Activated B cell treated with CpG ODN at 0.5 μM for 24 hours (primary cell): ENCODE measurements at regions of chr6 and their contacts with region 1.

Region 1: DNA sequence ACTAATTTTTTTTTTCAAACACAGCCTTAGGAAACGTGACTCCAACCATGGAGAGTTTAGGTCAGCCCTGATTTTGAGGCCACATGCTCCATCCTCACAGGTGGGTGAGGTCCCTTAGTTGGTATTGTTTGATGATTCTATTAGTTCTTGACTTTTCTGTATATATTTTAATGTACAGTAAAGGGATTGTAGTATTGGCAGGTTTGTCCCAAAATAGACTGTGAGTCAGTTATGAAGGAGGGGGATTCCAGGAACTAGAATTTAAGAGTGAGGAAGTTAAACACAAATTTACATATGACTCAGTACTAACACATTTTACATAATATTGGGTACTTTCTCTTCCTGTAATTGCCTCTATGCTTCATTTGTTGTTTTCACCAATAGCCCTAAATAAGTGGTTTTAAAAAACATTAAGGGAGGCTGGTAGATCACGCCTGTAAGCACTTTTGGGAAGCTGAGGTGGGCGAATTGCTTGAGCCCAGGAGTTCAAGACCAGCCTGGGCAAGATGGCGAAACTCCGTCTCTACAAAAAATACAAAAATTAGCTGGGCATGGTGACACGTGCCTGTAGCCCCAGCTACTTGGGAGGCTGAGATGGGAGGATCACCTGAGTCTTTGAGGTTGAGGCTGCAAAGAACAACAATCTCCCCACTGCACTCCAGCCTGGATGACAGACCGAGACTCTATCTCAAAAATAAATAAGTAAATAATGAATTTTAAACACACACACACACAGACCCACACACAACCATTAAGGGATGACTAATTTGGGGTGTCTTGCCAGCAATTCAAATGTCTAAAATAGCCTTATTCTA is 81.8 kb downstream of the SGK1 start:
- DNase-seq: no peak
- ATAC-seq: peak; percentile 78
- H3K4me3 Mint-ChIP-seq: peak overlapping the region; percentile 59
- H3K27ac Mint-ChIP-seq: peak overlapping the region; percentile 97
- H3K4me1 Mint-ChIP-seq: peaks cover 57% of the 10 kb centered on the region
- H3K27me3 Mint-ChIP-seq: no peaks in the 10 kb centered on the region
- CTCF ChIP-seq: no peak

Region 2: DNA sequence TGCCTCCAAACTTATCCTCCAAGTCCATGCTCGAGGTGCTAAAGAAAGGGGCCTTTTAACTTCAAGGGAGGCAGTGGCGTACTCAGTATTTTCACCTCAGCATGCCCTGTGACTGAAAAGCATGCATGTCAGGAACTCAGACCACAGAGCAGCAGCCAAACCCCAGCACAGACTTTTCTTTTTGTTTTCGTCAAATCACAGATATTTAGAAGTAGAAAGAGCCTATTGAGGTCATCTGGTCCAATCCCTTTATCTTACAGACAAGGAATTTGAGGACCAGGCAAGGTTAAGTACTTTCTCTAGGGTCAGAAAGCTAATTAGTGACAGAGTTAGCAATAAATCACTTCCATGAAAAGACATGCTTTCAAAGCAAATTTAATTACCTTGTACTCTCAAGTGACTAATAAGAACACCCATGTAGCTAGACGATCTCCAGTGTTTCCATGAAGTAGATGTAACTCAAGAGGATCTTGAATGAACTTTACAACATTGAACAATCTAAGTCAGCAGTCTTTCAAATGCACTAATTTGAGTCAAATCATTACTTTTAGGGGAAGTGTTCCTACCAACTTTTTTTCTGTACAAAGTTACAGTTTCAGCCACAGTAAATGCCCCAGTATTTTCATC is 1870.8 kb before region 1 on chr6:
- CTCF ChIA-PET with region 1: no interaction called
- POLR2A ChIA-PET with region 1: no interaction called
- intact Hi-C with region 1: loop called (anchors 10 kb)
- DNase-seq: no peak
- ATAC-seq: peak; percentile 83
- H3K4me3 Mint-ChIP-seq: peak overlapping the region; percentile 44
- H3K27ac Mint-ChIP-seq: peak overlapping the region; percentile 82
- H3K4me1 Mint-ChIP-seq: peaks cover 61% of the 10 kb centered on the region
- H3K27me3 Mint-ChIP-seq: no peaks in the 10 kb centered on the region
- CTCF ChIP-seq: no peak

Region 3: GRCh38 chr6:133977983-133978895 is 257.9 kb before region 1 on chr6:
- CTCF ChIA-PET with region 1: no interaction called
- POLR2A ChIA-PET with region 1: no interaction called
- intact Hi-C with region 1: no loop called
- DNase-seq: no peak
- ATAC-seq: no peak
- H3K4me3 Mint-ChIP-seq: no peak overlapping the region
- H3K27ac Mint-ChIP-seq: no peak overlapping the region
- H3K4me1 Mint-ChIP-seq: peaks cover 11% of the 10 kb centered on the region
- H3K27me3 Mint-ChIP-seq: no peaks in the 10 kb centered on the region
- CTCF ChIP-seq: no peak

Region 4: DNA sequence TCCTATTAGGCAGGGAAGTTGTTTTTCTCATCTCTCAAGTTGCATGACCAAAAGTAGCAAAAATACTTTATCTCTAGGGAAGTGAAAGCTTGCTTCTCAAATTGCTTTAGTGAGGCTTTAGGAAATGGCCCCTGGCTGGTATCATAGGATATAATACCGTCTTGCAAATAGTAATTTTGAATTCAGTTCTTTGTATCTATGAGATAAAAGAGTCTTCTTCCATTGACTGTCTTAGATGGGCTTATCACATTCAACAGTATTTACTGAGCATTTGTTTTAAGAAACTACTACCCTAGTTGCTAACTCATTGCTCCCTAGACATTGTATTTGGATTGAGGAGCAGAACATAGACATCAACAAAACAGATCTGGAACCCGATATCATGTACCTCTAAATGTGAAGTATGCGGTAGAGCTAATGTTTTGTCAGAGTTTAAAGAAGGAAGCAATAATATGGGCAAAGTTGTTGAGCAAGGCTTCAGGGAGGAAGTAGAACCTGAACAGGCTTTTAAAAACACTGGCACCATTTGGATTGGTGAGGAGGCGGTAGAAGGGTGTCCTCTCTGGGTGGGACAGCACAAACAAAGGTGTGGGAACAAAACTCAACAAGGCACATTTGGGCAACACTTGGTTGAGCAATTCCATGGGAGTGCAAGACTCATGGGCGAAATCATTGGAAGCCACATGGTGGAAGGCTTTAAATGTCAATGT is 19.7 kb before region 1 on chr6:
- CTCF ChIA-PET with region 1: no interaction called
- POLR2A ChIA-PET with region 1: interaction called, 4 read pairs
- intact Hi-C with region 1: loop called (anchors 1 kb)
- DNase-seq: no peak
- ATAC-seq: peak; percentile 74
- H3K4me3 Mint-ChIP-seq: peak overlapping the region; percentile 1
- H3K27ac Mint-ChIP-seq: peak overlapping the region; percentile 78
- H3K4me1 Mint-ChIP-seq: peaks cover 28% of the 10 kb centered on the region
- H3K27me3 Mint-ChIP-seq: no peaks in the 10 kb centered on the region
- CTCF ChIP-seq: no peak

Region 5: GRCh38 chr6:134288538-134289203 is 52.5 kb after region 1 on chr6:
- CTCF ChIA-PET with region 1: no interaction called
- POLR2A ChIA-PET with region 1: no interaction called
- intact Hi-C with region 1: loop called (anchors 1 kb)
- DNase-seq: no peak
- ATAC-seq: peak; percentile 83
- H3K4me3 Mint-ChIP-seq: peak overlapping the region; percentile 16
- H3K27ac Mint-ChIP-seq: peak overlapping the region; percentile 54
- H3K4me1 Mint-ChIP-seq: peaks cover 22% of the 10 kb centered on the region
- H3K27me3 Mint-ChIP-seq: no peaks in the 10 kb centered on the region
- CTCF ChIP-seq: no peak

Region 6: GRCh38 chr6:134315974-134316441 is 79.9 kb after region 1 on chr6:
- CTCF ChIA-PET with region 1: no interaction called
- POLR2A ChIA-PET with region 1: no interaction called
- intact Hi-C with region 1: no loop called
- DNase-seq: no peak
- ATAC-seq: no peak
- H3K4me3 Mint-ChIP-seq: no peak overlapping the region
- H3K27ac Mint-ChIP-seq: no peak overlapping the region
- H3K4me1 Mint-ChIP-seq: peaks cover 13% of the 10 kb centered on the region
- H3K27me3 Mint-ChIP-seq: peaks cover 18% of the 10 kb centered on the region
- CTCF ChIP-seq: no peak

Region 7: DNA sequence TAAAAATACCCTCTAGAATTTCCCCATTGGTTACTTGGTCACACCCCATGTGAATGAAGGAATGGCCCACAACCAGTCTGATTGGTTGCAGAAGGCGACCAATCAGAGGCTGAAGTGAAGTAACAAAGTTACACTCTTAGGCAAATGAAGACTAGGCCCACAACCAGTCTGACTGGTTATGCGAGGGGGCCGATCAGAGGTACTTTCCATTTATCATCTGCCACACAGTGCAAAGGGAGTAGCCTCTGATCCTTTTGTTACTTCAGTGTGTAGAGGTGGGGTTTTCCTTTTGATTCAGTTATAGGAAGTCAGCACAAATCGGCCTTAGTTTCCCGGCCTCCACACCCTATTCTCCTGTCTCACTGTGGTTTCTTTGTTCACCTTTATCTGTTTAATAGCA is 142.9 kb after region 1 on chr6:
- CTCF ChIA-PET with region 1: no interaction called
- POLR2A ChIA-PET with region 1: no interaction called
- intact Hi-C with region 1: loop called (anchors 2 kb)
- DNase-seq: no peak
- ATAC-seq: peak; percentile 93
- H3K4me3 Mint-ChIP-seq: peak overlapping the region; percentile 6
- H3K27ac Mint-ChIP-seq: peak overlapping the region; percentile 73
- H3K4me1 Mint-ChIP-seq: peaks cover 26% of the 10 kb centered on the region
- H3K27me3 Mint-ChIP-seq: no peaks in the 10 kb centered on the region
- CTCF ChIP-seq: no peak

Region 8: DNA sequence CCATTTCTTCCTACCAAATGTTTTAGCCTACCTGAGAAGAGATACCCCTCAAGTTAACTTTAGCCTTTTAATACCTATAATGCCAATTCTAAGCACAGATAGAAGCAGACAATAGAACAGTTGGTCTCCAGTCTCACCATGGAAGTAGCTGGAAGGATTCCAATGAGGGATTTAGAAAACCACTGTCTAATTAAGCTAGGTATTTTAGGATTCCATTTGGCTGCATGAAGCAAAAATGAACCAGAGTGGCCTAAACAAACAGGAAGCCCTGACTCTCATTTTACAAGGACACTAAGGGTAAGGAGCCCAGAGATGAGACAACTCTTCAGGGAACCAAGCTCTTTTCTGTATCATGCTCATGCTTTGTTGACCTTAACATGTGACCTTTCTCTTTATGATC is 514.5 kb after region 1 on chr6:
- CTCF ChIA-PET with region 1: no interaction called
- POLR2A ChIA-PET with region 1: no interaction called
- intact Hi-C with region 1: no loop called
- DNase-seq: no peak
- ATAC-seq: no peak
- H3K4me3 Mint-ChIP-seq: no peak overlapping the region
- H3K27ac Mint-ChIP-seq: no peak overlapping the region
- H3K4me1 Mint-ChIP-seq: no peaks in the 10 kb centered on the region
- H3K27me3 Mint-ChIP-seq: peaks cover 8% of the 10 kb centered on the region
- CTCF ChIP-seq: no peak

Region 9: GRCh38 chr6:135054569-135055498 is 818.7 kb after region 1 on chr6 and contains the start of gene HBS1L:
- CTCF ChIA-PET with region 1: no interaction called
- POLR2A ChIA-PET with region 1: interaction called, 3 read pairs
- intact Hi-C with region 1: loop called (anchors 5 kb)
- DNase-seq: peak; percentile 94
- ATAC-seq: peak; percentile 98
- H3K4me3 Mint-ChIP-seq: peak within 1 kb of the TSS; percentile 98
- H3K27ac Mint-ChIP-seq: peak within 1 kb of the TSS; percentile 97
- H3K4me1 Mint-ChIP-seq: peaks cover 35% of the 10 kb centered on the region
- H3K27me3 Mint-ChIP-seq: no peaks in the 10 kb centered on the region
- CTCF ChIP-seq: no peak
- total RNA-seq, gene HBS1L: 60.2 and 67.5 TPM in 2 replicates